Sigmoid colon (tissue), 7 donors: ENCODE measurements at regions of chr1 and their contacts with region 1.

Region 1: DNA sequence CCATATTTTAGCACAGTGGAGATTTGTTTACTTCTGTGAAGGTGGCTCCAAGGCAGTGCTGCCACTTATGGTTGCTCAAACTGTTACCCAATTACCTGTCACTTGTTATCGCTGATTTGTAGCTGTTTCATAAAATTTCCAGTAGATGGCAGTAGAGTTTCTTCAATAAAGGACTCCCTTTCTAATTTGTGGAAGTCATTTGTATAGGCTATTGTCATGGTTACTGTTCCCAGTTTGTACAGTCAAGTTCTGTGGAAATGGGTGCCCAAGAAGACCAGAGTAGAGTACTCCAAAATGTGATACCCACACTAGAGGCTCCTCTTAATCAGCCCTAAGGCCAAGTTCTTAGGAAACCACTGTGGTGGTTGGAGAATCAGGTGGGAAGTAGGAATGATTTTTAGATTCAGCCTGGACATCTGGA is 186.1 kb downstream of the CLEC20A start:
- DNase-seq: no peak
- H3K4me3 ChIP-seq: no peak overlapping the region
- H3K27ac ChIP-seq: no peak overlapping the region
- H3K4me1 ChIP-seq: peaks cover 0 to 14% (median 11%) of the 10 kb centered on the region in 4 donors
- H3K27me3 ChIP-seq: no peaks in the 10 kb centered on the region
- CTCF ChIP-seq: peak; percentile 29 to 70 (median 59)
- EP300 ChIP-seq: no peak
- POLR2A ChIP-seq: no peak

Region 2: GRCh38 chr1:178155481-178156255 is 155.0 kb before region 1 on chr1:
- intact Hi-C with region 1: no loop called
- DNase-seq: no peak
- H3K4me3 ChIP-seq: no peak overlapping the region
- H3K27ac ChIP-seq: no peak overlapping the region
- H3K4me1 ChIP-seq: peaks cover 0 to 8% (median 6%) of the 10 kb centered on the region in 4 donors
- H3K27me3 ChIP-seq: no peaks in the 10 kb centered on the region
- CTCF ChIP-seq: no peak
- EP300 ChIP-seq: no peak
- POLR2A ChIP-seq: no peak

Region 3: GRCh38 chr1:178501705-178502329 is 191.1 kb after region 1 on chr1:
- intact Hi-C with region 1: loop called (anchors 2 kb)
- DNase-seq: peak; percentile 75
- H3K4me3 ChIP-seq: no peak overlapping the region
- H3K27ac ChIP-seq: no peak overlapping the region
- H3K4me1 ChIP-seq: no peaks in the 10 kb centered on the region
- H3K27me3 ChIP-seq: no peaks in the 10 kb centered on the region
- CTCF ChIP-seq: peak; percentile 38 to 79 (median 62)
- EP300 ChIP-seq: no peak
- POLR2A ChIP-seq: no peak